Activated CD4-positive, alpha-beta memory T cell treated with anti-CD3 and anti-CD28 coated beads for 36 hours (primary cell): ENCODE measurements at regions of chr11 and their contacts with region 1.

Region 1: DNA sequence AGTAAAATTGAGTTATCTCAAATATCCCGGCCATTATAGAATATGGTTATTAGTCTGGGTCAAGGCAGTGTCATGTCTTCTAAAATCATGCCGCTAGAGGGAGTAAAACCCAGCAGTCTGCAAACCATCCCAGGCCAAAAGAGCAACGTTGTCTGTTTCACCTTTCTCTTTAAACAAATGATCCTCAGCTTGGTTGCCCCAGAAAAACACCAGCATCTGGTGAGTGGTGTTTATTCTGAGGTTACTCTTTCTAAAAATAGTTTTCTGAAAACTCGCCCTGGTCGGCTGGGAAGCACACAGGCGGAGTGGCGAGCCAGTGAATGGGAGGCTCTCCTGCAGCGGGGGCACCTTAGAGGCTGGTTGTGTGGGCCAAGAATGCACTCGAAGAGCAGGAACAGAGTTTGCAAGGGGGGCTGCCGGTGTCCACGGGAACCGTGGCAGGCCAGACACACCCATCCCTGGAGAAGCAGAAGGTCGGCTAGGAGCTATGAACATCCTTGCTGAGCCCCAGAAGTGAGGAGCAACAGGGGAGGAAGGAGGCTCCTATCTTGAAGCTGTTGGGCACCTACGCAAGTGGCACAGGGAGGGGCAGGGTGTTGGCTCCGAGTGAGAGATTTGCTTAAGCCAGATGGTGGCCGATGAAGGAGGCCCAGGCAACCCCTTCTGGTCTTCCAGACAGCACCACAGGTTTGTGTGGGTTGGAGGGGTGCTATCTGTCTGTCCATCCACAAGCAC is 297.1 kb downstream of the ETS1 start:
- DNase-seq: peak; percentile 80
- H3K4me3 Mint-ChIP-seq: peak overlapping the region; percentile 81
- H3K27ac Mint-ChIP-seq: peak overlapping the region; percentile 96
- H3K4me1 Mint-ChIP-seq: peaks cover 97% of the 10 kb centered on the region
- H3K27me3 Mint-ChIP-seq: no peaks in the 10 kb centered on the region

Region 2: GRCh38 chr11:128098781-128099180 is 191.5 kb before region 1 on chr11:
- CTCF ChIA-PET with region 1: no interaction called
- POLR2A ChIA-PET with region 1: no interaction called
- intact Hi-C with region 1: no loop called
- DNase-seq: no peak
- H3K4me3 Mint-ChIP-seq: no peak overlapping the region
- H3K27ac Mint-ChIP-seq: peak overlapping the region; percentile 47
- H3K4me1 Mint-ChIP-seq: peaks cover 31% of the 10 kb centered on the region
- H3K27me3 Mint-ChIP-seq: peaks cover 3% of the 10 kb centered on the region

Region 3: GRCh38 chr11:128195057-128195751 is 95.1 kb before region 1 on chr11:
- CTCF ChIA-PET with region 1: interaction called, 4 read pairs
- POLR2A ChIA-PET with region 1: interaction called, 5 read pairs
- intact Hi-C with region 1: loop called (anchors 1 kb)
- DNase-seq: peak; percentile 69
- H3K4me3 Mint-ChIP-seq: no peak overlapping the region
- H3K27ac Mint-ChIP-seq: peak overlapping the region; percentile 2
- H3K4me1 Mint-ChIP-seq: peaks cover 38% of the 10 kb centered on the region
- H3K27me3 Mint-ChIP-seq: no peaks in the 10 kb centered on the region

Region 4: DNA sequence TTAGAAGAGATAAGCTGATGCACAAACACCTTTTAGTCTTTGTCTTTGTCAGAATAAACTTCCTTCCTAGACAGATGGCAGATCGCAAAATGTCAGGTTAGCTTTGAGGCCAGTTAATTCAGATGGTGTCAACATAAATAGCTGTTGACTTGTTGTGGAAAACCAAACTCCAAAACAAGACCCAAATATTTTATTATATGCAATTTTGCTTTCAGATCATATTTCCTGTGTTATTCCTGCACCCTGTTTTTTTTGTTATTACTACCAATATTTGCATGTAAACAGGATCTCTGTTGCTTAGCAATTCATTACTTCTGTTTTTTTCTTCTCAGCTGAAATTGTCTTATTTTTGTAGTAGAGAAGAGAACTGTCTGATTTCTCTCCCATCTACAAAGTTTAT is 18.9 kb before region 1 on chr11:
- CTCF ChIA-PET with region 1: no interaction called
- POLR2A ChIA-PET with region 1: no interaction called
- intact Hi-C with region 1: no loop called
- DNase-seq: no peak
- H3K4me3 Mint-ChIP-seq: no peak overlapping the region
- H3K27ac Mint-ChIP-seq: no peak overlapping the region
- H3K4me1 Mint-ChIP-seq: peaks cover 29% of the 10 kb centered on the region
- H3K27me3 Mint-ChIP-seq: no peaks in the 10 kb centered on the region

Region 5: DNA sequence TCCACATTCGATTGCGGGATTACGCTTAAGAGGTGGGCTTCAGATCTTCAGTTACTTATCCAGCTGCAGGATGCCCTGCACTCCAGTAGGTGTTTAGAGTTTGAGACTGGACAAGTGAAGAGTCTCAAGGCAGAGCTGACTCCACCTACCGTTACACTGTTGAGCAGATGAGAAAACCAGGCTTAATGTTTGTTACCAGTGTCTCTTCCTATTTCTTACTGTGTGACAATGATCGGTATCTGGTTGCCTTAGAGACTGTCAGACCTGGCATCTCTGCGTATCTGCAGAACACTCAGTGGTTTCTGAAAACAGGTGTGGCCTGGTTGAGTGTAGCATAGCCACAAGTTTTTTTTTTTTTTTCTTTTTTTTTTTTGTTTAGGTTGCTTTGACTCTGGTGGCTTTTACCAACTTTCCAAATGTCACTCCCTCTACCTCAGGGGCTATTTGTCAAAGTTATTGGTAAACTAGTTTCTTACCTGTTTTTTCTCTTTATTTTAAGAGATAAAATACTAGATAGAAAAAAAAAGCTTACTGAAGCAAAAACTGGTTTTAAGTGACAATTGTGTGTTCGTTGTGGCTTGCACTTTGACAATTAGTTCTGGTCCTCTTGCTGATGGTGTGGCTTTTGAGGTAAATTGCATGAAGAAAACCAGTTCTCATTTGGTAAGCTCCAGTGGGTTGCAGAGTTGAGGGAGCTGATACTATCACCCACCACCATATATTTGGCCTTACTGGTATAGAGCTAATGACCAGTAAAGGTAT is 12.3 kb after region 1 on chr11:
- CTCF ChIA-PET with region 1: interaction called, 49 read pairs
- POLR2A ChIA-PET with region 1: interaction called, 59 read pairs
- intact Hi-C with region 1: loop called (anchors 1 kb)
- DNase-seq: peak; percentile 81
- H3K4me3 Mint-ChIP-seq: peak overlapping the region; percentile 79
- H3K27ac Mint-ChIP-seq: peak overlapping the region; percentile 94
- H3K4me1 Mint-ChIP-seq: peaks cover 78% of the 10 kb centered on the region
- H3K27me3 Mint-ChIP-seq: no peaks in the 10 kb centered on the region

Region 6: DNA sequence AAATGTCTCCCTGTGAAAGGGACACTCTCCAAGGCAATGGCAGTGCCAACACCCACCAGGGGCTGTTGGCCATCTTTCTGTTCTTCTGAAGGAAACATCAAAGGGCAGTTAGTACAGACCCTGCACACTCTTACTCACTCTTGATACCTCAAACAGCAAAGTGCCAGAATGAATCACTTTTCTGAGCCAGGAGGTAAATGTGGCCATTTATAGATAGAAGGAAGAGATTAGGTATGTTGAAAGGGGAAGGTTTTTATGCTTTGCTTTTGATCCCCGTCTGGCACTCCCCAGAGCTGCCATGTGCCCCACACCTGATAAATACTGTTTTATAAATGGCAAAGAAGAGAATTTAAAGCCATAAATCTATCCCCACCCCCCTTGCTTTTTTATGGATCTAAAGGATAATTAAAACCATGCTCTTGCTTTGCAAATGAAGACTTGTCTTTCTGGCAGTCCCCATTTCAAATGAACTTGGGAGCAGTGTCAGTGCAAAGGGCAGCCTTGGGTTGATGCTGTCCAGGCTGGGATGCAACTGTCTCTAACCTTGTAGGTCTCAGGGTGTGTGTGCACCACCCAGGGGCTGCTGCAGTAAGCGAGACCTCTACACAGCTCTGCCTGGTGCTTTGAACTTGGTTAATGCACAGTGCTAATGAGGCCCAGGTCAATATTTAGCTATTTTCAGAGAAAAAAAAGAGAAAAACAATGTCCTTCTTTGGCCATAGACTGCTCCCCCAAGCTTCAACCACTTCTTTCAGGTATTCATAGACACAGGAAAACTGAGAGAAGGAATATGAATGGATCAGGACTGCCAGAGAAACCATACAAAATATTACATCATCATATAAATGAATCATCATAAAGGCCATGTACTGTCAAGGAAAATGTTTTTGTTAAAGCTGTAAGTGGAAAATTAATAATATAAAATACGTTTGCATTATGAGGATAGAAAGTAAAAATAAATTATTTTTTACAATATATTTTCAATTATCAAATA is 89.6 kb after region 1 on chr11:
- CTCF ChIA-PET with region 1: no interaction called
- POLR2A ChIA-PET with region 1: no interaction called
- intact Hi-C with region 1: loop called (anchors 1 kb)
- DNase-seq: peak; percentile 57
- H3K4me3 Mint-ChIP-seq: peak overlapping the region; percentile 11
- H3K27ac Mint-ChIP-seq: peak overlapping the region; percentile 56
- H3K4me1 Mint-ChIP-seq: peaks cover 41% of the 10 kb centered on the region
- H3K27me3 Mint-ChIP-seq: no peaks in the 10 kb centered on the region

Region 7: GRCh38 chr11:128404437-128404836 is 114.2 kb after region 1 on chr11:
- CTCF ChIA-PET with region 1: no interaction called
- POLR2A ChIA-PET with region 1: no interaction called
- intact Hi-C with region 1: no loop called
- DNase-seq: no peak
- H3K4me3 Mint-ChIP-seq: no peak overlapping the region
- H3K27ac Mint-ChIP-seq: no peak overlapping the region
- H3K4me1 Mint-ChIP-seq: peaks cover 6% of the 10 kb centered on the region
- H3K27me3 Mint-ChIP-seq: no peaks in the 10 kb centered on the region

Region 8: GRCh38 chr11:128497061-128497775 is 206.9 kb after region 1 on chr11:
- CTCF ChIA-PET with region 1: interaction called, 14 read pairs
- POLR2A ChIA-PET with region 1: interaction called, 7 read pairs
- intact Hi-C with region 1: loop called (anchors 1 kb)
- DNase-seq: peak; percentile 67
- H3K4me3 Mint-ChIP-seq: peak overlapping the region; percentile 71
- H3K27ac Mint-ChIP-seq: peak overlapping the region; percentile 91
- H3K4me1 Mint-ChIP-seq: peaks cover 95% of the 10 kb centered on the region
- H3K27me3 Mint-ChIP-seq: no peaks in the 10 kb centered on the region

Region 9: DNA sequence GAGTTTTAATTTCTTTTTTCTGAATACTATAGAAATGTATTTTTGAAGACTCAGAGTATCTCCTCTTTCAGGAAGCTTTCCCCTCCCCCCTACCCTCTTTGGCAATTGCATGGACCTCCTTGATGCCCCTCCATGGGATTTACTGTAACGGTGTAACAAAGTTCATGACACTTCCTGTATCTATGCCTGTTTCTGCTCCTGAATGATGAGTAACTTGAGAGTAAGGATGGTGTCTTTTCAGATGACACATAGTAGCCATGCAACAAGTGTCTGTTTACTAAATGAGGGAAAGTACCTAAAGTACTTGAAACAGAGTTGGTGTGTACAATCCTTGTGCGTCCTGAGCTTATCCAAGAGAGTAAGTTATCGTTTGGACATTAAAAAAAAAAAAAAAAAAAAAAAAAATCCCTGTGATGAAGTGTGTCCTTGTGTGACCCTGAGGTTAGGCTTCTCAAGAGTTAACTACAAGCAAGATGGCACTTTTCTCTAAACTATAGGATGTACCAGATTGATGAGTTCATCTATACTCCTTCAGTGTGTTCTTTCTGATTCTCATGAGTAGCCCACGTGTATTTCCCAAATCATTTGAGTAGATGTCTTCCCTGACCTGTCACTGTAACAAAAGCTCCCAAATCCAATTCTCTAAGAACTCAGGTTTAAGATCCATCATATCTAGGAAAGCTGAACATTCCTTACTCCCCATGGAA is 289.7 kb after region 1 on chr11:
- CTCF ChIA-PET with region 1: interaction called, 6 read pairs
- POLR2A ChIA-PET with region 1: interaction called, 7 read pairs
- intact Hi-C with region 1: loop called (anchors 1 kb)
- DNase-seq: peak; percentile 27
- H3K4me3 Mint-ChIP-seq: peak overlapping the region; percentile 71
- H3K27ac Mint-ChIP-seq: peak overlapping the region; percentile 95
- H3K4me1 Mint-ChIP-seq: peaks cover 68% of the 10 kb centered on the region
- H3K27me3 Mint-ChIP-seq: no peaks in the 10 kb centered on the region

Region 10: DNA sequence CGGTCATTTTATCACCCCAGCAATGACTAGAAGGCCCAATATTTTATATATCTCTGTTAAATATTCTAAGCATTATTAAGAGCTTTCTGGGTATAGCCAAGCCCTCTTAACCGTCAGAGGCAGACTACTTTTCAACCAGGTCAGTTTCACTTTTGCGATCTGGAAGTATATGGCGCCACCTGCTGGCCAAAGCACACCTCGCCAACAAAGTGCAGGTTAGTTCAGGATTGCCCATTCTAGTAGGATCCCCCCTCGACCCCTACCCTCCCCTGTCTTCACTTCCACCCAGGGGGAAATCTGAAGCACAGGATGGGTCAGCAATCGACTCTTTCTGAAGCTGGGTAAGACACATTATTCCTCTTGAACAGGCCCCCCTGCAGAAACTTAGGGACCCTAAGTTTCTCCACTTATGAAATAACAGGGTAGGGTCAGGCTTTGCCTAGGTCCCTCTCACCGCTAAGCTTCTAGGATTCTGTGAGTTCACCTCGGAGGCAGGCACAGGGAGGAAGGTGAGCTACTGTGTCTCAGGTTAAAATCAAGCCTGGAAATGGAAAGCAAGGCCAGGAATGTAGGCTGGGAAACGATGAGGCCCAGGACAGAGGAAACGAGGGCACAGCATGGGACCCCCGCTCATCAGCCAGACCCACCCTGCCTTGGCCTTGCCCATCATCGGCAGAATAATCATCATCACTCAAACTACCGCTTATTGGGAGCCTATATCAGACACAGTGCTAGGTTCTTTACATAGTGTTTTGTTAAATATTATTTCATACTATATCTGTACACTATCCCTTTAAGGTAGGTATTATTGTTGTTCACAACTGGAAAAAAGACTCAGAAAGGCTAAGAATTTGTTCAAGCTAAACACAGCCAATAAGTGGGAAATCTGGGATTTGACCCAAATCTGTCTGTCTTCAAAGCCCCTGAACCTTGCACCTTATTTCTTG is 541.2 kb after region 1 on chr11:
- CTCF ChIA-PET with region 1: interaction called, 9 read pairs
- POLR2A ChIA-PET with region 1: interaction called, 4 read pairs
- intact Hi-C with region 1: loop called (anchors 1 kb)
- DNase-seq: peak; percentile 93
- H3K4me3 Mint-ChIP-seq: peak overlapping the region; percentile 30
- H3K27ac Mint-ChIP-seq: peak overlapping the region; percentile 89
- H3K4me1 Mint-ChIP-seq: peaks cover 19% of the 10 kb centered on the region
- H3K27me3 Mint-ChIP-seq: no peaks in the 10 kb centered on the region